GM10248 (cell line): ENCODE measurements at regions of chr2 and their contacts with region 1.

Region 1: DNA sequence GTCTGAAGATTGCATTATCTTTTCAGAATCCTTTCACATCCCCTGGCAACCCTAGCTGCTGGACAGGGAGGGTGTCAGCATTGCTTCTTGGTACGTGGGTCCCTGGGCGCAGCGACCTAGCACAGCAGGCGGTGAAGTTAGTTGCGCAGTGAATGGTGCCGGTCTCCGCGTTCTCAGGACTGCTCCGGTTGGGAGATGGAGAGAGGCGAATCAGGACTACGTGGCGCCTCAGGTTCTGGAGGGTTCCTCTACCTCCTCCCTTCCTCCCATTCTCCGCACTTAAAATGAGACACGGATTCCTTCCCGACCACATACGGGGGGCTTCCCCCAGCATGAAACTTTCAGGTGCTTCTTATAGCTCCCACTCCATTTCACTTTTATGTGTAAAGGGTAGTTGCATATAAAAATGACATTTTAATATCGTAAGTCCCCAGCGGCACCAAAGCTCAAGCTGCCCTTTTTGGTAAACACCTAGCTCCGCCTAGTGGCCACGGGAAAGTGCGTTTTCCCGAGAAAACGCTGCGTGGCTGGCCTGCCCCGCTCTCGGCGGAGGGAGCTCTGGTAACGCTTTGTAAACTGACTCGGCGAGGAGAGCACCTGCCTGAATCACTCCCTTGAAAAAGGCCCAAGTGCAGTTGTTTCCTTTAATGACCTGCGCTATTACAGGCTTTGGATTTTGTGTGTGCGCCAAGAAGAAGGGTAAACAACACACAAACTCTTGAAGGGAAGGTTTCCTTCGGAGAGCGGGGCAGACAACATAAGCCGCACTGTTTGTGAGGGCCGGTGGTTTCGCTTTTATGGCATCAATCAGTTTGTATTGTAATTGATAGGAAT is 32.9 kb upstream of the INHBB start:
- DNase-seq: peak; percentile 78
- CTCF ChIP-seq: peak; percentile 93

Region 2: DNA sequence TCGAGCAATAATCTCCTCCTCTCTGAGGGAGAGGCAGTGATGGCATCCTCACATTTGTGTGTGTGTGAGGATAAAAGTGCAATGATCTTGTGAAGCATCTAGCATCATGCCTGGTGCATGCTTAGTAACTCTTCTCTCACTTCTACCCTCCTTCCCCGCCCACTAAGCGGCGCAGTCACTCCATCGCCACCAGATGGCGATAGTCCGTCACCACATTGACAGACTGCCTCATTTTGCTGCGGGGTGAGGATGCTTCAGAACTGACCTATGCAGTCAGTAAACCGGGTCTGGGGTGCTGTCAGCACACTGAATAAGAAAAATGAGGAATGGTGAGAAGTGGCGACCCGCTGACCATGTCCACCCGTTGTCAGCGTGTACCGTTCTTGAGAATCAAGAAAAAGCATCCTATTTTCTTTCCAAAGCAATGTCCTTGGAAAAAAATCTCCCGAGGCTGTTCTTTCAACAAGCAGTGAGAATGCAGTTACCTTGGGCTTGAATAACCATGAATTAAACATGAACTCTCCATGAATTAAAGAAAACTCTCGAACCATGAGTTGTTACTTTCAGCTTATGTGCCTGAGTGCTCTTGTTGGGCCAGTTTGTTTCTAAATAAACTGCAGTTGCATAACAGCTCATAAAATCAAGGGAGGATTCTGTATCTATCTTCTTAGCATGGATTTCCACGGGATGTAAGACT is 671.4 kb before region 1 on chr2:
- CTCF ChIA-PET with region 1: interaction called, 13 read pairs
- POLR2A ChIA-PET with region 1: no interaction called
- DNase-seq: peak; percentile 83
- CTCF ChIP-seq: peak; percentile 99

Region 3: DNA sequence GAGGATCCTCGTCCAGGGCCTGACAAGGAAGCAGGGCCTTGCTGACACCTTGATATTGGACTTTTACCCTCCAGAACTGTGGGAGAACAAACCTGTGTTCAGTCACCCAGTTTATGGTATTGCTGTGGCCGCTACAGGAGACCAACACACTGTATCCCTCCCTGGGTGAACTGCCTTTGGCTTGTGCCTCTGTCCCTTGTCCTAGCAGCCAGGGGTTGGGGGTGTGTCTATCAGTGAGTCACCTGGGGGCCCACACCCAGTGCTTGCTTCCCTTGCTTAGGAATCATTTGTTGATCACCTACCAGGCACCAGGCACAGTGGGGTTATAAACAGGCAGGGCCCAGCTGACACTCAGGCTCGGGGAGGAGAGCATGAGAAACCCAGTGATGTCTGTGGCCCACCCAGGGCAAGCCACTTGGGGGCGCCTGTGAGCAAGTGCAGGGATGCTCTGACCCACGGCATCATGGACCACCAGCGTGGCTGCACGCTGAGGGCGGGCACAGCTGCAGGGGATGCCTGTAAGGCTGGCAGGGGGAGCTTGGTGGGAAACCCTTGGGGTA is 107.0 kb before region 1 on chr2:
- CTCF ChIA-PET with region 1: interaction called, 23 read pairs
- POLR2A ChIA-PET with region 1: no interaction called
- DNase-seq: peak; percentile 62
- CTCF ChIP-seq: peak; percentile 47

Region 4: GRCh38 chr2:120252225-120253021 is 60.7 kb before region 1 on chr2 and contains the start of gene RALB:
- CTCF ChIA-PET with region 1: interaction called, 43 read pairs
- POLR2A ChIA-PET with region 1: no interaction called
- DNase-seq: peak; percentile 99
- CTCF ChIP-seq: no peak

Region 5: DNA sequence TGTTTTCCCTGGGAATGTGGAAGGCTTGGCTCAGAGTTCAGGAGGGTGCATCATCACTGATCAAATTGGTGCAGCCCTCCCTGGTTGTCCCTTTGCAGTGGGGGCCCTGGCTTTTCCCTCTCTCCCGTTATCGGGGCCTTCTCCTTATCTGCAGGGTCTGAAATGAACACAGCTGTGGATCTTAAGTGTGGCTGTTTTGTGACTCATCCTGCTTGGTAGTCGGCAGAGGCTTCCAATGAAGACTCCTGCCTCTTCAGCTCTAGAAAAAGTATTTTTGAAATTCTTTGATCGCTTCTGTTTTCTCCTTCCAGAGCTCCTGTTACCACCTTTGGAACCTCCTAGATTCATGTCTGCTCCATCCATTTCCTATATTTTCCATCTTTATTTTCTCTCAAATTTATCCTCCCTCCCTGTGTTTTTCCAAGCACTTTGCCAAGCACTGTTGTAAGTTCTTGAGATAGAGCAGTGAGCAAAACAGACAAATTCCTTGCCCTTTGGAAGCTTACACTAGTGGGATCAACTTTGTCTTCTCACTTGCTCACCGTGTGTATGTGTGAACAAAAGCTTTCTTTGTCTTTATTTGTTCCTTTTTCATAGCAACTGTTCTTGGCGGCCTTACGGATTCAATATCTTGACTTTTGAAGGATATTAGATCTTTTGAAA is 14.8 kb before region 1 on chr2:
- CTCF ChIA-PET with region 1: interaction called, 47 read pairs
- POLR2A ChIA-PET with region 1: no interaction called
- DNase-seq: no peak
- CTCF ChIP-seq: no peak

Region 6: GRCh38 chr2:120334068-120334467 is 21.0 kb after region 1 on chr2:
- CTCF ChIA-PET with region 1: interaction called, 11 read pairs
- POLR2A ChIA-PET with region 1: no interaction called
- DNase-seq: no peak
- CTCF ChIP-seq: no peak